Activated T-helper 1 cell treated with anti-CD3 and anti-CD28 coated beads, Interleukin-12 subunit alpha, Interleukin-12 subunit beta, Interleukin-2, Interleukin-4 antibody, amounts not matched to agents 30 ng/mL and 10 ng/mL and 1 ng/mL, durations not matched to agents 14 hours and 24 hours and 36 hours (primary cell): ENCODE measurements at regions of chr17 and their contacts with region 1.

Region 1: DNA sequence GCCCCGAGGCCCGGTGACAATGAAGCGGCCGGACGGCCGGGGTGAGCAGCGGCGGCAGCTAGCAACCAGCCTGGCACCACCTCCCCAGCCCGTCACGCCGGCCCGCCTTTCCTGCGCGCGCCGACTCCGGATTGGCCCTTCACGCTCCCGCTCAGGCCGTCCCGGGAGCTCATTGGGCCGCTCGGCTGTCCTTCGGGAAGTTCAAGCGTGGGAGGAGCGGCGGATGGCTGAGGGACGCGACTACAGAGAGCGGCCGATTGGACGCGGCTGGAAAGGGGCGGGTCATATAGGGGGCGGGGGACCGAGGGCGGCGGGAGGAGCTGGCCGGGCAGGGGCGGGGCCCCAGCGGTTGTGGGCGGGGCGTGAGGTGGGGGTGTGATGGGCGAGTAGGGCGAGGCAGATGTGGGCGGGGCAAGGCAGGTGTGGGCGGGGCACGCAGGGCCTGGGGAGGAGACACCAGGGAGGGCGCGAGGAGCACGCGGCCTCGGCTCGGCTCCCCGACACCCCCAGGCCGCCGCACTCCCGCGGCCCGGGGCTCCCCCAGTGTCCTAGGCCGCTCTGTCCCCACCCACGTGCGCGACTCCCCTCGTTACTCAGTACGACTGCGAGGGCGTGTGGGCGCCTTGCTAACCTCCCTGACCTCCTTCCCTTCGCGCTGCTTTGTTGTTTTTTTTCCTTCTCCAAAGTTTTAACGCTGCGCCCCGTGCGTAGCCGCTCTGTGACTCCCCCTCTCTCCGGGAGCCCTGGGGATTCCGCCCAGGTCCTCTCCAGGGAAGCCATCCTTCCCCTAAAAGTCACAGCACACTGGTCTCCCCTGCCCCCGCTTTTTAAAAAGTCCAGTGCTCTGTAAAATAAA is at the start of gene CEP131:
- DNase-seq: peak; percentile 98
- H3K4me3 Mint-ChIP-seq: peak within 1 kb of the TSS; percentile 79
- H3K27ac Mint-ChIP-seq: peak within 1 kb of the TSS; percentile 80
- H3K4me1 Mint-ChIP-seq: peaks cover 20% of the 10 kb centered on the region
- H3K27me3 Mint-ChIP-seq: no peaks in the 10 kb centered on the region
- total RNA-seq, gene CEP131: 17.5 and 18.7 TPM in 2 replicates

Region 2: DNA sequence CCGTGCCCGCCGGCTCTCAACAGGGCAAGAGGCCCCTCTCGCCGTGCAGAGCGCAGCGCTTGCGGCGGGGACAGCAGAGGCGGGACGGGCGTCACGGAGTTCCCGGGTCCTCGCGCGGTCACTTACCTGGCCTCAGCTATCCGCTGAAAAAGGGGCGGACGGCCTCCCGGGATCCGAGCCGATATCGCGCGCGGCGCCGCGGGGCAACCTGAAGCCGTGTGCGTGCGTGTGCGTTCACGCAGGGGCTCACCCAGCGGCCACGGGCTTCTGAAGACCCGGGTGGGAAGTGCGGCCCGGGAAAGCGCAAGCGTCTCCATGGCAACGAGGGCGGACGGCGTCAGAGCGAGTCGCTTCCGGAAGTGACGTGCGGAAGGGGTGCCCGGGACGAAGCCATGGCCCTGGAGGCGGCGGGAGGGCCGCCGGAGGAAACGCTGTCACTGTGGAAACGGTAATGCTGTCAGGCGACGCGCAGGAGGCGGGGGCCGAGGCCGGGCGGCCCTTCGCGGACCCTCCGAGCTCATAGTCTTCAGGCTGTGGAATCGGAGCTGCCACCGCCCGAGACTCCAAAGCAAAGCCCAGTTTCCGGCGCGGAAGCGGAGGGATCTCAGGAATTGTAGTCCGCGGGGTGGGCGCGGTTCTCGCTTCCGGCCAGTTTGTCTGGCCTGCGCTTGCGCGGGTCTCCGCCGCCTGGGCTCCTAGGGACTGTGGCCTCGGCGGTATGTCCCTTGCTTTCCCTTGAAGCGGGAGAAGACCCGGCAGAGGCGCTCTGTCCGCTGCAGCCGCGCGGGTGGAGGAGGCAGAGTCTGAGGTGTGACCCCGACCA is 808.1 kb before region 1 on chr17 and contains the start of gene ENDOV:
- intact Hi-C with region 1: loop called (anchors 1 kb)
- DNase-seq: peak; percentile 90
- H3K4me3 Mint-ChIP-seq: peak within 1 kb of the TSS; percentile 87
- H3K27ac Mint-ChIP-seq: peak within 1 kb of the TSS; percentile 65
- H3K4me1 Mint-ChIP-seq: peaks cover 18% of the 10 kb centered on the region
- H3K27me3 Mint-ChIP-seq: peaks cover 16% of the 10 kb centered on the region
- total RNA-seq, gene ENDOV: 15.6 and 16.9 TPM in 2 replicates

Region 3: DNA sequence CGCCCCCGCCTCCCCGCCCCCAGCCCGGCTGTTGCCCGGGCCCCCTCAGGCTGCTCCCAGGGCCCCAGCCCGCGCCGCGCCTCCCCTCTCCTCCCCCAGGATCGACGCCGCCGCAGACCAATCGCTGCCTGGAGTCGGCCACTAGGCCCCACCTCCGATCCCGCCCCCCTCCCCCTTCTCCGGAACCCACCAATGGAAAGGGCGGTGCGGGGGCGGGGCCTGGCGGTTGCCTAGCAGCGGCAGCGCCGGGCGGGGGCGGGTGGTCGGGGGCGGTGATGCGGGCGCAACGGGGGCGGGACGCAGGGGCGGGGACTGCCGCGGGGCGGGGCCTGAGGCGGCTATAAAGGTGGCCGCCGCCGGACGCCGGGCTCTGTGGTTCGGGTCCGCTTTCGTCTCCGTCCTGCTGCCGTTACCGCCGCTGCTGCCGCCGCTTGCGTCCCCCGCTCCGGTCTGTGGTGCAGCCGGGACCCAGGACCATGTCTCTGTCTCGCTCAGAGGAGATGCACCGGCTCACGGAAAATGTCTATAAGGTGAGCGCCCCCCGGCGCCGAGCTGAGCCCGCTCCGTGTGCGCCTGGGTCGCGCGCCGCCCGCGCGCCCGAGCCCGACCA is 188.2 kb before region 1 on chr17 and contains the start of gene BAIAP2:
- intact Hi-C with region 1: loop called (anchors 10 kb)
- DNase-seq: peak; percentile 89
- H3K4me3 Mint-ChIP-seq: peak within 1 kb of the TSS; percentile 83
- H3K27ac Mint-ChIP-seq: peak within 1 kb of the TSS; percentile 84
- H3K4me1 Mint-ChIP-seq: peaks cover 17% of the 10 kb centered on the region
- H3K27me3 Mint-ChIP-seq: peaks cover 34% of the 10 kb centered on the region
- total RNA-seq, gene BAIAP2: 4.3 and 5.8 TPM in 2 replicates

Region 4: GRCh38 chr17:81119223-81120148 is 103.6 kb before region 1 on chr17:
- intact Hi-C with region 1: loop called (anchors 1 kb)
- DNase-seq: peak; percentile 88
- H3K4me3 Mint-ChIP-seq: peak overlapping the region; percentile 72
- H3K27ac Mint-ChIP-seq: peak overlapping the region; percentile 84
- H3K4me1 Mint-ChIP-seq: no peaks in the 10 kb centered on the region
- H3K27me3 Mint-ChIP-seq: no peaks in the 10 kb centered on the region

Region 5: DNA sequence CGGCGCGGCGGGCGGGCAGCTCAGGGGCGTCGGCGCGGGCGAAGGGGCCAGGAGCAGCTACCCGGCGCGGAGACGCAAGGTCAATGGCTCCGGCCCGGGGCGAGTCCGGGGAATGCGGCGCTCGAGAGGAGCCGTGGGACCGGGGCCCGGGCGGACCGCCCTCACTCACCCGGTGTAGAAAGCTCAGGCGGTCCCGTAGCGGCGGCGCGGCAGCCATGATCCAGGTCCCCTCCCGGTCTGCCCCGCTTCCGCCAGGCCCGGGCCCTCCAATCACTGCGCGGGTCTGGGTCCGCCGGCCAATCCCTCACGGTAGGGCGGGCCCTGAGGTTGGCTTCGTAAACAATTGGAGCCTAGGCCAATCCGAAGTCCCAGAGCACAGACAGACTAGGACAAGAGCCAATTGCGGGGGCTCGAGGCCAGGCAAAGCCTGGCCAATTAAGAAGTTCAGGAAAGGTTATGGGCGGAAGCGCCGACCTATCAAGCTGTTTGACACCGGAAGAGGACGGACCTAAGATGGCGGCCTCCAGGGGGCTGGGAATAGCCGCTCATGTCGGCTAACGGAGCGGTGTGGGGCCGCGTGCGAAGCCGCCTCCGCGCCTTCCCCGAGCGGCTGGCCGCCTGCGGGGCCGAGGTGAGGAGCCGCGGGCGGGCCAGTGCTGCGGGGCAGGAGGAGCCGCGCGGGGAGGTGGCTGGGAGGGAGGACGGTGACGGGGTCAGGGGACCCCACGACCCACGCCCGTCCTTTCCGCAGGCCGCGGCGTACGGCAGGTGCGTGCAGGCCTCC is 15.9 kb after region 1 on chr17 and contains the starts of genes NDUFAF8 and TEPSIN:
- intact Hi-C with region 1: loop called (anchors 1 kb)
- DNase-seq: peak; percentile 95
- H3K4me3 Mint-ChIP-seq: peak within 1 kb of the TSS; percentile 96
- H3K27ac Mint-ChIP-seq: peak within 1 kb of the TSS; percentile 94
- H3K4me1 Mint-ChIP-seq: peaks cover 19% of the 10 kb centered on the region
- H3K27me3 Mint-ChIP-seq: peaks cover 2% of the 10 kb centered on the region
- total RNA-seq, gene NDUFAF8: 71.9 and 78.3 TPM in 2 replicates
- total RNA-seq, gene TEPSIN: 37.7 and 41.0 TPM in 2 replicates

Region 6: GRCh38 chr17:81285179-81285878 is 62.2 kb after region 1 on chr17:
- intact Hi-C with region 1: loop called (anchors 1 kb)
- DNase-seq: peak; percentile 51
- H3K4me3 Mint-ChIP-seq: peak overlapping the region; percentile 85
- H3K27ac Mint-ChIP-seq: peak overlapping the region; percentile 95
- H3K4me1 Mint-ChIP-seq: peaks cover 26% of the 10 kb centered on the region
- H3K27me3 Mint-ChIP-seq: no peaks in the 10 kb centered on the region

Region 7: GRCh38 chr17:81294856-81295680 is 71.9 kb after region 1 on chr17 and contains the start of gene SLC38A10:
- intact Hi-C with region 1: loop called (anchors 1 kb)
- DNase-seq: peak; percentile 92
- H3K4me3 Mint-ChIP-seq: peak within 1 kb of the TSS; percentile 92
- H3K27ac Mint-ChIP-seq: peak within 1 kb of the TSS; percentile 90
- H3K4me1 Mint-ChIP-seq: peaks cover 27% of the 10 kb centered on the region
- H3K27me3 Mint-ChIP-seq: no peaks in the 10 kb centered on the region
- total RNA-seq, gene SLC38A10: 99.7 and 101 TPM in 2 replicates